ENCODE measurements at regions of chr17 and their contacts with region 1.

Region 1: GRCh38 chr17:2244545-2245525 is 58.8 kb downstream of the SMG6 start:
- DNase-seq: peak; percentile 50 to 90
- H3K4me3 ChIP-seq: no peak overlapping the region
- H3K27ac ChIP-seq: no peak overlapping the region
- H3K4me1 ChIP-seq: no peaks in the 10 kb centered on the region
- H3K27me3 ChIP-seq: no peaks in the 10 kb centered on the region
- CTCF ChIP-seq: peak; percentile 97 to 100 (median 99)
- EP300 ChIP-seq: no peak
- POLR2A ChIP-seq: no peak
- RAD21 ChIP-seq: peak; percentile 99

Region 2: GRCh38 chr17:1789936-1790335 is 454.9 kb before region 1 on chr17:
- CTCF ChIA-PET with region 1: no interaction called
- POLR2A ChIA-PET with region 1: no interaction called
- DNase-seq: no peak
- H3K4me3 ChIP-seq: no peak overlapping the region
- H3K27ac ChIP-seq: no peak overlapping the region
- H3K4me1 ChIP-seq: no peaks in the 10 kb centered on the region
- H3K27me3 ChIP-seq: no peaks in the 10 kb centered on the region
- CTCF ChIP-seq: no peak
- EP300 ChIP-seq: no peak
- POLR2A ChIP-seq: no peak
- RAD21 ChIP-seq: no peak

Region 3: GRCh38 chr17:2054512-2055291 is 190.1 kb before region 1 on chr17 and contains the start of gene HIC1:
- CTCF ChIA-PET with region 1: interaction called, 121 read pairs
- POLR2A ChIA-PET with region 1: interaction called, 8 read pairs
- DNase-seq: peak in 1 of 2 experiments; percentile 90
- H3K4me3 ChIP-seq: peak within 1 kb of the TSS; percentile 15 to 58 (median 42)
- H3K27ac ChIP-seq: no peak within 1 kb of the TSS
- H3K4me1 ChIP-seq: peaks cover 0 to 20% (median 11%) of the 10 kb centered on the region in 4 experiments; a peak in 5 of 7 replicates
- H3K27me3 ChIP-seq: peaks cover 78 to 93% (median 91%) of the 10 kb centered on the region in 4 experiments
- CTCF ChIP-seq: peak; percentile 85 to 92 (median 87)
- EP300 ChIP-seq: 0 out of 3 replicates have a peak, but pooled peaks of 1 of the 2 experiments have one; percentile 12
- POLR2A ChIP-seq: no peak
- RAD21 ChIP-seq: peak; percentile 77 to 89
- total RNA-seq, gene HIC1: 0.09 and 0.19 TPM in 2 replicates

Region 4: GRCh38 chr17:2083613-2084128 is 161.2 kb before region 1 on chr17:
- CTCF ChIA-PET with region 1: interaction called, 10 read pairs
- POLR2A ChIA-PET with region 1: no interaction called
- DNase-seq: no peak
- H3K4me3 ChIP-seq: no peak overlapping the region
- H3K27ac ChIP-seq: no peak overlapping the region
- H3K4me1 ChIP-seq: 0 out of 7 replicates have a peak, but pooled peaks cover 0 to 3% (median 0%) of the 10 kb centered on the region in 4 experiments
- H3K27me3 ChIP-seq: no peaks in the 10 kb centered on the region
- CTCF ChIP-seq: no peak
- EP300 ChIP-seq: no peak
- POLR2A ChIP-seq: no peak
- RAD21 ChIP-seq: no peak

Region 5: GRCh38 chr17:2172077-2172851 is 72.6 kb before region 1 on chr17:
- CTCF ChIA-PET with region 1: interaction called, 17 read pairs
- POLR2A ChIA-PET with region 1: no interaction called
- DNase-seq: no peak
- H3K4me3 ChIP-seq: no peak overlapping the region
- H3K27ac ChIP-seq: no peak overlapping the region
- H3K4me1 ChIP-seq: peaks cover 0 to 4% (median 0%) of the 10 kb centered on the region in 4 experiments; a peak in 2 of 7 replicates
- H3K27me3 ChIP-seq: no peaks in the 10 kb centered on the region
- CTCF ChIP-seq: no peak
- EP300 ChIP-seq: no peak
- POLR2A ChIP-seq: no peak
- RAD21 ChIP-seq: no peak

Region 6: GRCh38 chr17:2215616-2216364 is 29.0 kb before region 1 on chr17:
- CTCF ChIA-PET with region 1: interaction called, 14 read pairs
- POLR2A ChIA-PET with region 1: no interaction called
- DNase-seq: peak in 1 of 2 experiments; percentile 59
- H3K4me3 ChIP-seq: peak overlapping the region in 1 of 4 experiments; percentile 1; a peak in 1 of 8 replicates
- H3K27ac ChIP-seq: no peak overlapping the region
- H3K4me1 ChIP-seq: peaks cover 0 to 11% (median 5%) of the 10 kb centered on the region in 4 experiments; a peak in 5 of 7 replicates
- H3K27me3 ChIP-seq: no peaks in the 10 kb centered on the region
- CTCF ChIP-seq: no peak
- EP300 ChIP-seq: no peak
- POLR2A ChIP-seq: no peak
- RAD21 ChIP-seq: no peak

Region 7: DNA sequence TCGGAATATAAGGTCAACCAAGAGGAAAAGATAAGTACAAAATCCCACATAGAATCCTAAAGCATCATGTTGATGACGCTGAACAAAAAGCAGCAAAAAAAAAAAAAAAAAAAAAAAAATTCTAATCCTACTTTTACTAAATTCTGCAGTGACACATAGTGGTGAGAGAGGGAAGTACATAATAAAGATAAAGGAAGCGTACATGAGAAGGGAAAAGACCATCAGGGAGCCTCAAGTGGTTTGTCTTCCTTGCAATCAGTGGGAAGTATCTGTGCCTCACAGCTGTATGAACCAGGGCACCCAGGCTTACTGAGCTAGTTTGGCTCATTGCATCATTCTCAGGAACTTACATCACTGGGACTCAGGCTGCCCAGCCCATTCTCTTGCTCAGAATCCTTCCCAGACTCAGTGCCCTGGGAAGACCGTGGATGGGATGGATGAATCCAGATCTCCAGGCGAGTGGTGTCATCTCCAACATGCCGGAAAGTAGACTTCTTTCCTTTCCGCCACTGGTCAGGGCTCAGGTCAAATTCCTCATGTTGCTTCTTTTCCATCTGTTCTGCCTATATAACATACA is 37.5 kb after region 1 on chr17:
- CTCF ChIA-PET with region 1: interaction called, 17 read pairs
- POLR2A ChIA-PET with region 1: no interaction called
- DNase-seq: no peak
- H3K4me3 ChIP-seq: no peak overlapping the region
- H3K27ac ChIP-seq: no peak overlapping the region
- H3K4me1 ChIP-seq: no peaks in the 10 kb centered on the region; a peak in 1 of 7 replicates
- H3K27me3 ChIP-seq: no peaks in the 10 kb centered on the region
- CTCF ChIP-seq: peak in 2 of 3 experiments; percentile 19 to 37; a peak in 2 of 4 replicates
- EP300 ChIP-seq: no peak
- POLR2A ChIP-seq: no peak
- RAD21 ChIP-seq: peak; percentile 37 to 45

Measured in H1 (cell line).